ENCODE measurements at regions of chr6 and their contacts with region 1.

Region 1: GRCh38 chr6:44002593-44003344 is 124.5 kb downstream of the MRPL14 start:
- DNase-seq: peak; percentile 46 to 76 (median 59)
- ATAC-seq: peak in 3 of 4 donors; percentile 9 to 54 (median 50)
- H3K4me3 ChIP-seq: peak overlapping the region; percentile 3 to 49 (median 38)
- H3K27ac ChIP-seq: peak overlapping the region in 10 of 12 donors; percentile 47 to 97 (median 86)
- H3K4me1 ChIP-seq: peaks cover 0 to 52% (median 17%) of the 10 kb centered on the region in 12 donors
- H3K27me3 ChIP-seq: peaks cover 0 to 37% (median 17%) of the 10 kb centered on the region in 9 donors
- CTCF ChIP-seq: peak in 1 of 12 donors; percentile 31
- POLR2A ChIP-seq: no peak

Region 2: GRCh38 chr6:43723737-43724295 is 279.0 kb before region 1 on chr6:
- intact Hi-C with region 1: loop called in 1 of 10 experiments (anchors 5 kb)
- DNase-seq: peak; percentile 60 to 72 (median 66)
- ATAC-seq: peak; percentile 66 to 88 (median 81)
- H3K4me3 ChIP-seq: no peak overlapping the region
- H3K27ac ChIP-seq: no peak overlapping the region
- H3K4me1 ChIP-seq: peaks cover 3 to 21% (median 6%) of the 10 kb centered on the region in 12 donors
- H3K27me3 ChIP-seq: no peaks in the 10 kb centered on the region
- CTCF ChIP-seq: peak; percentile 46 to 72 (median 58)
- POLR2A ChIP-seq: no peak

Region 3: GRCh38 chr6:43904311-43905123 is 98.3 kb before region 1 on chr6:
- intact Hi-C with region 1: loop called in 1 of 10 experiments (anchors 5 kb)
- DNase-seq: no peak
- ATAC-seq: no peak
- H3K4me3 ChIP-seq: no peak overlapping the region
- H3K27ac ChIP-seq: no peak overlapping the region
- H3K4me1 ChIP-seq: peaks cover 0 to 15% (median 0%) of the 10 kb centered on the region in 12 donors
- H3K27me3 ChIP-seq: no peaks in the 10 kb centered on the region
- CTCF ChIP-seq: no peak
- POLR2A ChIP-seq: no peak

Region 4: GRCh38 chr6:44049163-44049988 is 46.6 kb after region 1 on chr6:
- intact Hi-C with region 1: loop called in 1 of 10 experiments (anchors 5 kb)
- DNase-seq: peak in 2 of 5 donors; percentile 31 to 33
- ATAC-seq: peak in 2 of 4 donors; percentile 21 to 30
- H3K4me3 ChIP-seq: no peak overlapping the region
- H3K27ac ChIP-seq: peak overlapping the region in 8 of 12 donors; percentile 6 to 79 (median 42)
- H3K4me1 ChIP-seq: peaks cover 0 to 60% (median 37%) of the 10 kb centered on the region in 12 donors
- H3K27me3 ChIP-seq: no peaks in the 10 kb centered on the region
- CTCF ChIP-seq: no peak
- POLR2A ChIP-seq: no peak

Region 5: DNA sequence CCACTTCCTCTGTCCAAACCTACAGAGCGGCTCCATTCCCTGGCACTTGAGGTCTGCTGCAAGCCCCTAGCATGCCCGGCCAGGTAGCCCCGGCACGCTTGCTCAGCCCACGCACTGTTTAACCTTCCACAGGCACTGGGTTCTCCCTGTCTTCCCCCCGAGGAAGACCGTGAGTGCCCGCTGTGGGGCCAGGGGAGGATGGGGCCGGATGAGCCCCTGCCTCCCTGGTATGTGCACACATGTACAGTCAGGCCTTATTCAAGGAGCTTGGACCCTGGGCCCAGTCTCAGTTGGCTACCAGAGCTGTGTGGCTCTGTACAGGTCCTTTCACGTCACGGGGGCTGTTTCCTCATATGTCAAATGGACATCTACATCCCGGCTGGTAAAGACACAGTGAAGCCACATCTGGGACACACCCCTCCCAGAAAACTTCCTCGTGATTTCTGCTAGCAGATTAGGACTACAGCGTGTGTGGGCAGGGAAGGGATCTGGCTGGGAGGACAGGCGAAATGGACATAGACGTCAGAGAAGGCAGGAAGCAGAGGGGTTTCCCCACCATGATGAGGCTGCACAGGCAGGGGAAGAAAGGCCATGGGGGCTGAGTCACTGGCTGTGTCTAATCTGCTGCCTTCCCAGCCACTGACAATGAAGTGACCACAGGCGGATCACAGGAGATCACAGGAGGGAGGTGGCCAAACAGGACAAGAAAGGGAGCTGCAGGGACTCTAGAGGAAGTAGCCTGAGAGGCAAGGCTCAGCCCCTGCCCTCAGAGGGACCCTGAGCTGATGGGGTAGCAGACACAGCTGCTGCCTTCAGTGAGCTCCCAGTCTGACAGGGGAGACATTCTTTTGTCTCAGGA is 61.5 kb after region 1 on chr6:
- intact Hi-C with region 1: loop called in 4 of 10 experiments (anchors 5 kb)
- DNase-seq: peak in 4 of 5 donors; percentile 57 to 88 (median 69)
- ATAC-seq: peak; percentile 17 to 81 (median 68)
- H3K4me3 ChIP-seq: no peak overlapping the region
- H3K27ac ChIP-seq: peak overlapping the region in 9 of 12 donors; percentile 3 to 93 (median 65)
- H3K4me1 ChIP-seq: peaks cover 5 to 80% (median 46%) of the 10 kb centered on the region in 12 donors
- H3K27me3 ChIP-seq: no peaks in the 10 kb centered on the region
- CTCF ChIP-seq: no peak
- POLR2A ChIP-seq: no peak

Region 6: GRCh38 chr6:44226368-44227146 is 223.8 kb after region 1 on chr6:
- intact Hi-C with region 1: no loop called
- DNase-seq: peak; percentile 64 to 77 (median 66)
- ATAC-seq: peak; percentile 29 to 64 (median 38)
- H3K4me3 ChIP-seq: peak overlapping the region in 11 of 12 donors; percentile 12 to 56 (median 43)
- H3K27ac ChIP-seq: peak overlapping the region; percentile 81 to 99 (median 92)
- H3K4me1 ChIP-seq: peaks cover 9 to 98% (median 75%) of the 10 kb centered on the region in 12 donors
- H3K27me3 ChIP-seq: no peaks in the 10 kb centered on the region
- CTCF ChIP-seq: no peak
- POLR2A ChIP-seq: no peak